ENCODE measurements at regions of chr1 and their contacts with region 1.

Region 1: GRCh38 chr1:23098463-23099170 is 70.0 kb downstream of the LUZP1 start:
- DNase-seq: peak; percentile 43 to 72
- H3K4me3 ChIP-seq: no peak overlapping the region
- H3K27ac ChIP-seq: no peak overlapping the region
- H3K4me1 ChIP-seq: peaks cover 0 to 5% (median 1%) of the 10 kb centered on the region in 4 experiments; a peak in 2 of 7 replicates
- H3K27me3 ChIP-seq: no peaks in the 10 kb centered on the region
- CTCF ChIP-seq: peak; percentile 27 to 95 (median 91)
- EP300 ChIP-seq: no peak
- POLR2A ChIP-seq: no peak
- RAD21 ChIP-seq: peak; percentile 97 to 99

Region 2: DNA sequence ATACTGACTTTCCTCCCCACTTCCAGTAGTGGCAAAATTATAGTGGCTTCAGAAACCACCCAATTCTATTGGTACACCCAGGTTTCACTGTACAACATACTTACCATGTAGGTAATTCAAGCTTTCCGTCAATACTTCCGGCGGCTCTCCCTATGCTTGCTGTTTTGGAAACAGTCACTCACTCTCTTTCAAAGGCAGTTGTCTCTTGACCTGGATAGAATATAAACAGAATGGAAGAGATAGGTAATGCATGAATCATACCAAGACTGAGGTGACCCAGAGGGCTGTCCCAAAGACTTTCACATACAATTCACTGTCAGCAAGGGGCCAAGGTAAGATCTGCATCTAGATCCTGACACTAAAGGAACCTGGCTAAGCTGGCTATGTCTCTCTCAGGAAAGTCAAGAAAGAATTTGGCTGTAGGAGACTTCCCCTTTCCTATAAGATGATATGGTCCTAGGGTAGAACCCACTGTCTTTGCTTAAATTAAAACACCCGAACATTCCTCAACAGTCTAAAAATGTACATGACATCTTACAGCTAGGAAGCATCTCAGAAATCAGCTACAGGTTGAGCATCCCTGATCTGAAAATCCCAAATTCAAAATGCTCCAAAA is 10.4 kb after region 1 on chr1:
- CTCF ChIA-PET with region 1: interaction called, 32 read pairs
- POLR2A ChIA-PET with region 1: interaction called, 11 read pairs
- DNase-seq: no peak
- H3K4me3 ChIP-seq: no peak overlapping the region
- H3K27ac ChIP-seq: no peak overlapping the region
- H3K4me1 ChIP-seq: no peaks in the 10 kb centered on the region; a peak in 1 of 7 replicates
- H3K27me3 ChIP-seq: no peaks in the 10 kb centered on the region
- CTCF ChIP-seq: no peak
- EP300 ChIP-seq: no peak
- POLR2A ChIP-seq: no peak
- RAD21 ChIP-seq: no peak

Region 3: DNA sequence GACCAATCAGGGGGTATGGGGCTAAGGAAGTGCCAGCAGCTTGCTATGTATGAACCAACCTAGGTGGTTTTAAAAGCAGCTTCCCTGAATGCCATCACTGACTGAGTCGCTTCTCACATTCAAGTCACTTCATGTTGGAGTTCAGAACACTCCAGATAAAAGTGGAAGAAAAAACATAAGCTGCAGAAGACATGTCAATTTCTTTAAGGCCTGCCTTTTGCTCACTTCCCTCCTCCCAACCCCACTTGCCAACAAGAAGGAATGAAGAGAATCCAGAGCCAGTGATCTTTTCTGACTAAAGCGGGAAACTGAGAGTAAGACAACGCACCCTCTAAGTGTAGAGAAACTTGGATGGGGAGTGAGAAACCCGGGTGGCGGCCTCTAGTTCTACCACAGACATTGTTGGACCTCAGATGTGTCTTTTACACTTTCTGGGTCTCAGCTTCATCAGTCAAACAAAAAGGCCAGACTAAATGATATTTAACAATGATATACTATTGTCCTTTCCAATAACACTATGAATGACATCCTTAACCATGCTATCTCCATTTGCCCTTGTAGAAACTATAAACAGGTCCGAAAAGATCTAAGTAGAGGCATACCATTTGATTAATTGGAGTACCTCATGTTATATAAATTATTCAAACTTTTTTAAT is 15.9 kb after region 1 on chr1:
- CTCF ChIA-PET with region 1: interaction called, 32 read pairs
- POLR2A ChIA-PET with region 1: interaction called, 11 read pairs
- DNase-seq: no peak
- H3K4me3 ChIP-seq: no peak overlapping the region
- H3K27ac ChIP-seq: no peak overlapping the region
- H3K4me1 ChIP-seq: peaks cover 0 to 5% (median under 1%) of the 10 kb centered on the region in 4 experiments; a peak in 3 of 7 replicates
- H3K27me3 ChIP-seq: no peaks in the 10 kb centered on the region
- CTCF ChIP-seq: no peak
- EP300 ChIP-seq: no peak
- POLR2A ChIP-seq: no peak
- RAD21 ChIP-seq: no peak

Region 4: GRCh38 chr1:23122023-23122748 is 23.6 kb after region 1 on chr1:
- CTCF ChIA-PET with region 1: interaction called, 22 read pairs
- POLR2A ChIA-PET with region 1: interaction called, 3 read pairs
- DNase-seq: no peak
- H3K4me3 ChIP-seq: no peak overlapping the region
- H3K27ac ChIP-seq: no peak overlapping the region
- H3K4me1 ChIP-seq: peaks cover 0 to 6% (median 0%) of the 10 kb centered on the region in 4 experiments; a peak in 4 of 7 replicates
- H3K27me3 ChIP-seq: no peaks in the 10 kb centered on the region
- CTCF ChIP-seq: no peak
- EP300 ChIP-seq: no peak
- POLR2A ChIP-seq: no peak
- RAD21 ChIP-seq: no peak

Region 5: GRCh38 chr1:23168457-23169194 is 70.0 kb after region 1 on chr1 and contains the start of gene LUZP1:
- CTCF ChIA-PET with region 1: interaction called, 705 read pairs
- POLR2A ChIA-PET with region 1: interaction called, 17 read pairs
- DNase-seq: peak; percentile 73 to 98
- H3K4me3 ChIP-seq: peak within 1 kb of the TSS; percentile 70 to 95 (median 83)
- H3K27ac ChIP-seq: peak within 1 kb of the TSS; percentile 80
- H3K4me1 ChIP-seq: peaks cover 0 to 8% (median 3%) of the 10 kb centered on the region in 4 experiments; a peak in 4 of 7 replicates
- H3K27me3 ChIP-seq: no peaks in the 10 kb centered on the region
- CTCF ChIP-seq: no peak
- EP300 ChIP-seq: no peak
- POLR2A ChIP-seq: peak; percentile 88 to 90
- RAD21 ChIP-seq: no peak
- total RNA-seq, gene LUZP1: 59.9 and 60.5 TPM in 2 replicates

Region 6: GRCh38 chr1:23210351-23210785 is 111.8 kb after region 1 on chr1:
- CTCF ChIA-PET with region 1: interaction called, 13 read pairs
- POLR2A ChIA-PET with region 1: no interaction called
- DNase-seq: peak in 1 of 2 experiments; percentile 65
- H3K4me3 ChIP-seq: no peak overlapping the region
- H3K27ac ChIP-seq: no peak overlapping the region
- H3K4me1 ChIP-seq: peaks cover 0 to 2% (median 0%) of the 10 kb centered on the region in 4 experiments; a peak in 1 of 7 replicates
- H3K27me3 ChIP-seq: no peaks in the 10 kb centered on the region
- CTCF ChIP-seq: peak; percentile 57 to 73 (median 72)
- EP300 ChIP-seq: no peak
- POLR2A ChIP-seq: no peak
- RAD21 ChIP-seq: peak; percentile 44 to 69

Measured in H1 (cell line).